Motor neuron (in vitro differentiated cells): ENCODE measurements at regions of chr7 and their contacts with region 1.

Region 1: DNA sequence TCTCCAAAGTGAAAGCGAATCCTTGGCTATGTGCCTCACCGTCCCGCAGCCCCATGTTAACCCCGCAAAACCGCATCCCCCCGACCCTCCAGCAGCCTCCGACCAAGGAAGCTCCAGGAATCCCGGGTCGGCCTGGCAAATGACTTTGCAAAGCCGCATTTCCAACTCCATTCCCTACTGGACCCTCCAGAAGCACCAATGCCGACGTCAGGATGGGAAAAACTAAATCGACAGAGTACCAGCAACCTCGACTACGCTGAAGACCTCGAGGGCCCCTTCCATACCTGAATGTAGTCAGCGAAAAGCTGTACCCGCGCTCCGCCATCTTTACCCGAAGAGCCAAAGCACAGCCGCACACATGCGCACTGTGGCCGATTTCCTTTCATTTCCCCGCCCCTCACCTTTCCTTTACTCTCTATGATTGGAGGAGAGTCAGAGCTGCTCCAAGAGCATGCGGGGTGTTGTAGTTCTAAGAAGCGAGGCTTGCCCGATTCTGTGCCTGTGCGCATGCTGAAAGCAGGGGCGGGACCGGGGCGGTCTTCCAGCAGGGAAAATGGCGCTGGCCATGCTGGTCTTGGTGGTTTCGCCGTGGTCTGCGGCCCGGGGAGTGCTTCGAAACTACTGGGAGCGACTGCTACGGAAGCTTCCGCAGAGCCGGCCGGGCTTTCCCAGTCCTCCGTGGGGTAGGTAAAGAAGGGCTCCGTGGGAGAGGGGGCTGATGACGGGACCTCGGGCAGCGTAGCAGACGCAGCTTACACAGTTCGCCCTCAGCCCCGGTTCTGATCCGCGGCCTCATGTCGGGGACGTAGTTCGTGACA is at the starts of genes MRPL32 and PSMA2:
- ATAC-seq: peak; percentile 96 to 100 (median 100)
- H3K4me3 ChIP-seq: peak within 1 kb of the TSS; percentile 64 to 96 (median 84)
- H3K27ac ChIP-seq: peak within 1 kb of the TSS; percentile 54 to 85
- H3K4me1 ChIP-seq: peaks cover 12 to 15% of the 10 kb centered on the region in 2 donors
- total RNA-seq, gene MRPL32: 49.4 to 95.6 (median 76.1) TPM
- total RNA-seq, gene PSMA2: 68.7 to 129 (median 93.6) TPM

Region 2: GRCh38 chr7:43108255-43109011 is 176.4 kb after region 1 on chr7:
- in situ Hi-C with region 1: loop called in 1 of 9 experiments (anchors 25 kb)
- ATAC-seq: peak; percentile 45 to 92 (median 55)
- H3K4me3 ChIP-seq: no peak overlapping the region
- H3K27ac ChIP-seq: no peak overlapping the region
- H3K4me1 ChIP-seq: peaks cover 0 to 9% of the 10 kb centered on the region in 2 donors

Region 3: GRCh38 chr7:43260980-43261878 is 329.2 kb after region 1 on chr7:
- in situ Hi-C with region 1: loop called in 1 of 9 experiments (anchors 25 kb)
- ATAC-seq: peak in 6 of 8 experiments; percentile 29 to 97 (median 84)
- H3K4me3 ChIP-seq: no peak overlapping the region
- H3K27ac ChIP-seq: no peak overlapping the region
- H3K4me1 ChIP-seq: no peaks in the 10 kb centered on the region

Region 4: GRCh38 chr7:43454936-43455518 is 523.0 kb after region 1 on chr7:
- in situ Hi-C with region 1: loop called in 2 of 9 experiments (anchors 25 kb)
- ATAC-seq: peak; percentile 30 to 78 (median 42)
- H3K4me3 ChIP-seq: no peak overlapping the region
- H3K27ac ChIP-seq: no peak overlapping the region
- H3K4me1 ChIP-seq: peaks cover 0 to 2% of the 10 kb centered on the region in 2 donors

Region 5: DNA sequence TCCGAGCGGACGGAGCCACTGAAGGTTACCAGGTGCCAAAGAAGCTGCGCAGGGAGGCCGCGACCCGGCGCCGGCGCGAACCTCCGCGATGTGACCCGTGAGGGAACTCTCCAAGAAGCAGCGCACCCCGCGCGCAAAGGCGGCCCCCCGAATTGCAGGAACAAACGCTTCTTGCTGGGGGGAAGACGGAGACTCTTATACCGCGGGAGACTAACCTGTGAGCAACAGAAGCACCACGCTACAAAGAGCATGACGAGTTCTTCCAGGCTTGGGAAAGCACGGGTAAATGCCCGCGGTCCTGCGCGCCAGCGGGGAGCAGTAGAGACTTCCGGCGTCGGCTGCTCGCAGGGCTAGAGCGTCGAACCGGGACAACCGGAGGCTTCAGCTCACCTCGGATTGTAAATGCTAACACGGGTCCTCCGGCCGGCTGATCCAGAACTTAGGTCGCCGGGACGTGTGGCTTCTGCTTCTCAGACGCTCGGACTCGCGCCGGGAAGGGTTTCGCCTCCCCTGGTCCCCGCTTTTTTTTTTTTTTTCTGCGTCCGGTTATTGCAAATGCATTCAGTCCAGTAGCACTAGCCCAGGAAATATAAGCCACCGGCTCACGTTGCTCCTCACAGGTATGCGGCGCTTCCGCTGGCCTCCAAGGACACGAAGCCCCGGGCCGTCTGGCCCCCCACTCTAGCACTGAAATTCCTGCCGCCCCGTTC is 797.3 kb after region 1 on chr7 and contains the start of gene COA1:
- in situ Hi-C with region 1: loop called in 1 of 9 experiments (anchors 10 kb)
- ATAC-seq: peak; percentile 96 to 99 (median 98)
- H3K4me3 ChIP-seq: peak within 1 kb of the TSS; percentile 58 to 94 (median 82)
- H3K27ac ChIP-seq: peak within 1 kb of the TSS; percentile 78 to 82
- H3K4me1 ChIP-seq: peaks cover 2 to 17% of the 10 kb centered on the region in 2 donors
- total RNA-seq, gene COA1: 46.0 to 93.2 (median 76.1) TPM

Region 6: DNA sequence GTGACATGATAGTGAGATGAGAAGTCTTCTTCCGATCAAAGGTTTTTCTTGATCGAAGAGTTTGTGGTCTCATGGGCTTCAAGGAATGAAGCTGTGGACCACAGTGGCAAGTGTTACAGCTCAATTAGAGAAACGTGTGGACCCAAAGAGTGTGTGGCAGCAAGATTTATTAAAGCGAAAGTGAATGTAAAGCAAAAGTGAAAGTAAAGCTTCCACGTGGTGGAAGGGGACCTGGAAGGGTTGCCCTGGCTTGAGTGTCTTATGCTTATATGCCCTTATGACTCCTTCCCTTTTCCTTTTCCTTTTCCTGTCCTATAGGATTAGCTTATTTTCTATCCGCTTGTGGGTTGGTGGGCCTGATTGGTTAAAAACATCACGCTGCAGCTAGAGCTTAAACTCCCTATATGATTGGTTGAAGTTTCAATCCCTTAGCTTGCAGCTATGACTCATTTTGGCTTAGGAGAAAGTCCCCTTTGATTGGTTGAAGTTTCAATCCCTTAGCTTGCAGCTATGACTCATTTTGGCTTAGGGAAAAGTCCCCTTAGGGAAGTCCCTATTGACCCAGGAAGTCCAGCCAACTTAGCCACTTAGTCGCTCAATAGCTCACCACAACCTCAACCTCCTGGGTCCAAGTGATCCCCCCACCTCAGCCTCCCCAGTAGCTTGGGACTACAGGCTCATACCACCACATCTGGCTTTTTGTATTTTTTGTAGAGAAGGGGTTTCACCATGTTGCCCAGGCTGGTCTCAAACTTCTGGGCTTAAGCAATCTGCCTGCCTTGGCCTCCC is 902.6 kb after region 1 on chr7:
- in situ Hi-C with region 1: loop called in 1 of 9 experiments (anchors 25 kb)
- ATAC-seq: peak in 2 of 8 experiments; percentile 12 to 45
- H3K4me3 ChIP-seq: no peak overlapping the region
- H3K27ac ChIP-seq: no peak overlapping the region
- H3K4me1 ChIP-seq: peaks cover 0 to 2% of the 10 kb centered on the region in 2 donors